CD8-positive, alpha-beta T cell (primary cell): ENCODE measurements at regions of chrX and their contacts with region 1.

Region 1: GRCh38 chrX:16524316-16524715 is 125.6 kb upstream of the S100G start:
- DNase-seq: no peak
- ATAC-seq: no peak
- H3K4me3 ChIP-seq: no peak overlapping the region
- H3K4me3 Mint-ChIP-seq: no peak overlapping the region
- H3K27ac ChIP-seq: no peak overlapping the region
- H3K27ac Mint-ChIP-seq: no peak overlapping the region
- H3K4me1 ChIP-seq: peaks cover 22% of the 10 kb centered on the region
- H3K4me1 Mint-ChIP-seq: peaks cover 23% of the 10 kb centered on the region
- H3K27me3 ChIP-seq: no peaks in the 10 kb centered on the region
- H3K27me3 Mint-ChIP-seq: no peaks in the 10 kb centered on the region
- CTCF ChIP-seq: no peak

Region 2: DNA sequence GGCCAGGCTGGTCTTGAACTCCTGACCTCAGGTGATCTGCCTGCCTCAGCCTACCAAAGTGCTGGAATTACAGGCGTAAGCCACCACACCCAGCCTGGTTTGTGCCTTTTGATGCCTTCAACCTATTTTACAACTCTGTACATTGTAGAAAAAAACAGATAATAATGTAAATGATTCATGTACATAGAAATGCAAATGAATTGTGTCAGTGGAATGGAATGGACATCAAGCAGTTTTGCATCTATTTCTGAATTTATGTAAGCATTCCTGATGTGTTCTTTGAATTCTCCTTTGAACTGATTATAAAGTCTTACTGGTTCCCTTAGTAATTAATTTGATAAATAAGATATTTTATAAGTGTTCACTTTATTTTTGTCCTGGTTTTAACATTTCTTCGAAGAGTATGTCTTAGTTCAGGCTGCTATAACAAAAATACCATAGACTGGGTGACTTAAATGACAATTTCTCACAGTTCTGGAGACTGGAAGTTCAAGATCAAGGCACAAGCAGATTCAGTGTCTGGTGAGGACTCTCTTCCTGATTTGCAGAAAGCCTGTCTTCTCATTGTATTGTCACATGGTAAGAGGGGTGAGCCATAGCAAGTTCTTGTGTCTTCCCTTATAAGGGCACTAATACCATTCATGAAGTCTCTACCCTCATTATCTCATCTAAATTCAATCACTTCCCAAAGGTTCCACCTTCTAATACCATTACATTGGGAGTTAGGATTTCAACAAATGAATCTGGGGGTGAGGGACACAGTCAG is 36.5 kb before region 1 on chrX:
- CTCF ChIA-PET with region 1: no interaction called
- POLR2A ChIA-PET with region 1: no interaction called
- intact Hi-C with region 1: loop called in 1 of 2 experiments (anchors 5 kb)
- DNase-seq: no peak
- ATAC-seq: no peak
- H3K4me3 ChIP-seq: no peak overlapping the region
- H3K4me3 Mint-ChIP-seq: no peak overlapping the region
- H3K27ac ChIP-seq: no peak overlapping the region
- H3K27ac Mint-ChIP-seq: no peak overlapping the region
- H3K4me1 ChIP-seq: peaks cover 5% of the 10 kb centered on the region
- H3K4me1 Mint-ChIP-seq: peaks cover 13% of the 10 kb centered on the region
- H3K27me3 ChIP-seq: no peaks in the 10 kb centered on the region
- H3K27me3 Mint-ChIP-seq: no peaks in the 10 kb centered on the region
- CTCF ChIP-seq: no peak